ENCODE measurements at regions of chr5 and their contacts with region 1.

Region 1: GRCh38 chr5:82174128-82174918 is 103.8 kb downstream of the RPS23 start:
- DNase-seq: peak; percentile 86
- H3K4me3 Mint-ChIP-seq: no peak overlapping the region
- H3K27ac Mint-ChIP-seq: no peak overlapping the region
- H3K4me1 Mint-ChIP-seq: peaks cover 3% of the 10 kb centered on the region
- H3K27me3 Mint-ChIP-seq: no peaks in the 10 kb centered on the region

Region 2: DNA sequence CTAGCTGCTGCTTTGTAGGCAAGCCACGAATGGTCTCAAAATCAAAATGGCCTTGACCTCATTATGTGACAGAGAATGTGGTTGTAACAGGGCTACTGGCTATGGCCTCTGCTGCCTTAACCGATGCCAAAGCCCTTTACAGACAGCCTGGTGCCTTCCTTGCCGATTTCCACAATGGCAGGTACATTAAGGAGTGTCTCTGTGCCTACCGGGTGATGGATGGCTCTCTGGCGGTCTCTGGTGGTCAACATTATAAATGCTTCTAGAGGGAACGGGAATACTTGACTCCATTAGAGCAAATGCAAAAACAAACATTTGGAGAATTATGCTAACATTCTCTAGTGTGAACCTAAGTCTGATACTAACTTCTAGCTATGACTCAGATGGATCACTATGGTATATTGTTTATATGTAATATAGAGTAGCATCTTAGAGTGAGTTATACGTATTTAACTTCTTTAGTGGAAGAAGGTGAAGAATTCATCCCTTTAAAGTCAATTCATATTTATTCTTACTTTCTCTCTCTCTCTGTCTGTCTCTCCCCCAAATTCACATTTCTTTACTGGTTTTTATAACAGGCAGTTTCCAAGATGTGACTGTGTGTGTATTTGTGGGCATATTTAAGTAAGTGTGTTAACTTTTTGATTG is 51.3 kb after region 1 on chr5:
- intact Hi-C with region 1: loop called (anchors 1 kb)
- DNase-seq: peak; percentile 90
- H3K4me3 Mint-ChIP-seq: no peak overlapping the region
- H3K27ac Mint-ChIP-seq: no peak overlapping the region
- H3K4me1 Mint-ChIP-seq: peaks cover 3% of the 10 kb centered on the region
- H3K27me3 Mint-ChIP-seq: peaks cover 5% of the 10 kb centered on the region

Region 3: DNA sequence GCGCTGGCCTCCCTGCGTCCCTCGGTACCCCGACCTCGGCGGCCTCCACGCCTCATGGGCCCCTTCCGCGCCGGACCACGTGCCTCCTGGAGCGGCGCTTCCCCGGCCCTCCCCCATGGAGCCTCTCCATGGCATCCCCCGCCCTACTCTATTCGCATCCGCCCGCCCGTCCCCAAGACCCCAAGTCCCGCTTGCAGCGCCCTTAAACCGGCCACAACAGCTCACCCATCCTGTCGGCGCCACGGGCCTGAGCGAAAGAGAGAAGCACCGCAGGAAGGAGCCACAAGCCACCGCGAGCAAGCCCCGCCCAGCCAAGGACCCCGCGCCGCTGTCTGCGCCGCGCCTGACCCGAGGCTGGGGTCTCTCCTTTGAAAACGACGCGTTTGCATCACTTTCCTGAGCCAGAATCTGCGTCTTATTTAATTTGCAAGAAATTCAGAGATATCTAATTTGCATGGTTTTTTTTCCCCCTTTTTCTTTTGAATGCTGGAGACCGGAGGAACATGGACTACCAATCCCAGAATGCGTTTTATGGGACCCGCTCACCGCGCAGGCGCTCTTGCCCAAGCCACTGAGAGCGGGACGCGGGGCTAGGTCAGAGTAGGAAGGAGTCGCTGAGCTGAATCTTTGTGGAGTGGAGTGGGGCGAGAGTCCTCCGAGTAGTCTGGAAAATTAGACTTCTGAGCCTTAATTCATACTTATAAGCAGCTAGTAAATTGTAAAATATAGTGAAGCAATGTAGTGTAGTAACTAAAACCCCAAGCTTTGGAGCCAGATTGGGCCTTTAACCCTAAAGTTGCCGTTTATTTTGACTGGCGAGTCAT is 104.0 kb after region 1 on chr5 and contains the start of gene RPS23:
- intact Hi-C with region 1: no loop called
- DNase-seq: peak; percentile 96
- H3K4me3 Mint-ChIP-seq: peak within 1 kb of the TSS; percentile 89
- H3K27ac Mint-ChIP-seq: peak within 1 kb of the TSS; percentile 98
- H3K4me1 Mint-ChIP-seq: peaks cover 32% of the 10 kb centered on the region
- H3K27me3 Mint-ChIP-seq: no peaks in the 10 kb centered on the region
- total RNA-seq, gene RPS23: 2,481 and 2,489 TPM in 2 replicates

Region 4: GRCh38 chr5:83564069-83564749 is 1389.9 kb after region 1 on chr5:
- intact Hi-C with region 1: loop called (anchors 10 kb)
- DNase-seq: no peak
- H3K4me3 Mint-ChIP-seq: no peak overlapping the region
- H3K27ac Mint-ChIP-seq: no peak overlapping the region
- H3K4me1 Mint-ChIP-seq: no peaks in the 10 kb centered on the region
- H3K27me3 Mint-ChIP-seq: peaks cover 32% of the 10 kb centered on the region

Measured in activated CD4-positive, alpha-beta T cell treated with anti-CD3 and anti-CD28 coated beads, Interleukin-2, amount 10 ng/mL, durations not matched to agents 24 days and 14 days (primary cell).